ENCODE measurements at regions of chr17 and their contacts with region 1.

Region 1: GRCh38 chr17:12580640-12581039 is 85.0 kb upstream of the MYOCD start:
- DNase-seq: no peak
- ATAC-seq: no peak
- H3K4me3 Mint-ChIP-seq: no peak overlapping the region
- H3K27ac Mint-ChIP-seq: no peak overlapping the region
- H3K4me1 Mint-ChIP-seq: no peaks in the 10 kb centered on the region
- H3K27me3 Mint-ChIP-seq: peaks cover 3% of the 10 kb centered on the region

Region 2: GRCh38 chr17:12545877-12546513 is 34.6 kb before region 1 on chr17:
- CTCF ChIA-PET with region 1: no interaction called
- POLR2A ChIA-PET with region 1: no interaction called
- intact Hi-C with region 1: loop called in 1 of 2 experiments (anchors 5 kb)
- DNase-seq: peak; percentile 19
- ATAC-seq: no peak
- H3K4me3 Mint-ChIP-seq: no peak overlapping the region
- H3K27ac Mint-ChIP-seq: no peak overlapping the region
- H3K4me1 Mint-ChIP-seq: no peaks in the 10 kb centered on the region
- H3K27me3 Mint-ChIP-seq: no peaks in the 10 kb centered on the region

Region 3: DNA sequence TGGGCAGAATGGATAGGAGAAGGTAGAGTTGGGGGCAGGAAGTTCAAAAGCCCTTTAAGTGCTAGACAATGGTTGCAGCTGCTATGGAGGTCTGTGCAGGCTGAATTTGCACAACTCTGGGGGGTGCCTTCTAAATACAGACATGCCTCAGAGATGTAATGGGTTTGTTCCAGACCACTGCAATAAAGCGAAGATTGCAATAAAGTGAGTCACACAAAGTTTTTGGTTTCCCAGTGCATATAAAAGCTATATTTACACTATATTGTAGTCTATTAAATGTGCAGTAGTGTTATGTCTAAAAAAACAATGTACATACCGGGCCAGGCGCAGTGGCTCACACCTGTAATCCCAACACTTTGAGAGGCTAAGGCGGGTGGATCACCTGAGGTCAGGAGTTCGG is 24.6 kb after region 1 on chr17:
- CTCF ChIA-PET with region 1: no interaction called
- POLR2A ChIA-PET with region 1: no interaction called
- intact Hi-C with region 1: no loop called
- DNase-seq: no peak
- ATAC-seq: no peak
- H3K4me3 Mint-ChIP-seq: no peak overlapping the region
- H3K27ac Mint-ChIP-seq: no peak overlapping the region
- H3K4me1 Mint-ChIP-seq: no peaks in the 10 kb centered on the region
- H3K27me3 Mint-ChIP-seq: no peaks in the 10 kb centered on the region